ENCODE measurements at regions of chr1 and their contacts with region 1.

Region 1: DNA sequence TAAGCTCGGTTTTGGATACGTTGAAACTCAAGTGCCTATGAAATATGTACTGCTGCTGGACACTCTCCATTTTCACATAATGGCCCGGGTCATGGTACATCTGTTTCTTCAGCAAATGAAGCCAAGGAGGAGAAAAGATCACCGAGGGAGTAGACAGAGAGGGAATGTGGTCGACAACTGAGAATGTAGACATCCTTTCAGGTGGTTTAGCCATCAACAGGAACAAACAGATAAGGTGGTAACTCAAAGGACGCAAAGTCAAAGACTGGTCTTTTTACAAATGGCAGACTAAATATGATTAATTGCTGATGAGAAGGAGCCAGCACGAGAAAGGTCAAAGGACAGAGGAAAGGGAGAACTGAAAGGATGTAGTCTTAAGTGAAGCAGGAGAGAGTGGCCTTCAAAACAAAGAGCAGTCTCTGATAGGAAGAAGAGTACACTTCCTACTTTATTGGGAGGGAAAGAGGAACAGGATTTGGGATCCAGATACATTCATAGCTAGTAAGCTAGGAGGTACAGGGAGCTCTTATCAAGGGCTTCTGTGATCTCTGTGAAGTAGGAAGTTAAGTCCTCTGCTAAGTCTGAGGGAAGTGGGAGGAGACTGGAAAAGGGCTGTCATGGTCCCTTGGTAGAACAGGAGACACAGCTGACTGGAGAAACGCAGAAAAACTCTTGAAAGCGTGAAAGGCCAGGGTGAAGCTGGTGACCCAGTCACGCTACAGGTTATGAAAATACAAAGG is 28.3 kb downstream of the NUP133 start:
- DNase-seq: no peak
- H3K4me3 ChIP-seq: no peak overlapping the region
- H3K27ac ChIP-seq: no peak overlapping the region
- H3K4me1 ChIP-seq: no peaks in the 10 kb centered on the region
- H3K27me3 ChIP-seq: no peaks in the 10 kb centered on the region
- CTCF ChIP-seq: no peak
- POLR2A ChIP-seq: no peak

Region 2: GRCh38 chr1:228664399-228664914 is 815.4 kb before region 1 on chr1:
- CTCF ChIA-PET with region 1: interaction called, 11 read pairs
- POLR2A ChIA-PET with region 1: no interaction called
- dilution Hi-C with region 1: no loop called
- intact Hi-C with region 1: loop called (anchors 2 kb)
- DNase-seq: peak; percentile 61
- H3K4me3 ChIP-seq: no peak overlapping the region
- H3K27ac ChIP-seq: no peak overlapping the region
- H3K4me1 ChIP-seq: no peaks in the 10 kb centered on the region
- H3K27me3 ChIP-seq: no peaks in the 10 kb centered on the region
- CTCF ChIP-seq: peak; percentile 60 to 66
- POLR2A ChIP-seq: no peak

Region 3: DNA sequence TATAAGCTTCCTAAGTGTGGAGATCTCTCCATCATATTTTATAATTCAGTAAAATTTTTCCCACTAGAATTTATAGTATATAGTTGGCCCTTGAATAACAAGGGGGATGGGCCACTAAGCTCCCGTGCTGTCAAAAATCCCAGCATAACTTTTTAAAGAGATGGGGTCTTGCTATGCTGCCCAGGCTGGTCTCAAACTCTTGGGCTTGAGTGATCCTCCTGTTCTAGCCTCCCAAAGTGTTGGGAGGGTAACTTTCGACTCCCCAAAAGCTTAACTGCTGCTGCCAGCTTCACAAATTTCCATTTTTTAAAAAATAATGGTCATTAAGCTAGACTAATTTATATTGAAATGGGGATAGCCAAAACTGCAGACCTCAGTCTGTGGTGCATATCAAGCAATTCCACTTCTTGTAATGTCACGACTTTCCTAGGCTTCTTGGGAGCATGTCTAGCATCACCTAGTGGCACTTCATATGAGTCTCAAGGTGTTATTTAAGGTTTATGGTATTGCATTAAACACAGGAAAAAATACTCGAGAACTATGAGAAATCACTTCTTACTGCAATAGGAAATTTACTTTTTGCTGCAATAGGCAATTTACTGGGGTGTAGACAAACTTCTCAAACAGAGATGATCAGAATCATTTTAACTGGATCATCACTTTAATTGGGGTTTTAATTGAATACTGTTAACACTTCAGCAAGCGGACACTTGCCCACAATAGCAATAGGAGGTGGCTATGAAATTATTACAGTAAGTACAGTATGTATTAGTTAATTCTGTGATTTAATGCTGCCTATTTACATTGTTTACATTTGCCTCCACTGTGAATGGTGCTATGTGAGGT is 26.7 kb before region 1 on chr1:
- CTCF ChIA-PET with region 1: interaction called, 10 read pairs
- POLR2A ChIA-PET with region 1: no interaction called
- dilution Hi-C with region 1: no loop called
- intact Hi-C with region 1: no loop called
- DNase-seq: no peak
- H3K4me3 ChIP-seq: no peak overlapping the region
- H3K27ac ChIP-seq: no peak overlapping the region
- H3K4me1 ChIP-seq: no peaks in the 10 kb centered on the region
- H3K27me3 ChIP-seq: no peaks in the 10 kb centered on the region
- CTCF ChIP-seq: peak in 1 of 2 donors; percentile 25
- POLR2A ChIP-seq: no peak

Region 4: DNA sequence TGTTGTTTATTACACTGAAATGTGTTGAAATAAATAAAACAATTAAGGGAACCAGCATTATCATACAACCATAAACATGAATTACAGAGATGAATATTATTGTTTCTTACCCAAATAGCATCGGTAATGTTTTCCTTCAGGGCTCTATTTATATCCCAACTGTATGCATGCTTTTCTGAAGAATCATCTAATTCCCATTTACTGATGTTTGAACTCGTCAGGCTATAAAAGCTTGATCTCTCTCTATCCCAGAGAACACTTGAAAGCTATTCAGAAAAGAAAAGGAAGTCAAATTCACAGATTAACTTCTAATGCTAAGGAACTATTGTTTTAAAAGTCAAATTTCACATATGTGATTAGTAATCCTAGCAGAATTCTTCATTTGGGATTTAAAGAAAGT is 16.0 kb after region 1 on chr1:
- CTCF ChIA-PET with region 1: interaction called, 14 read pairs
- POLR2A ChIA-PET with region 1: no interaction called
- dilution Hi-C with region 1: no loop called
- intact Hi-C with region 1: no loop called
- DNase-seq: no peak
- H3K4me3 ChIP-seq: no peak overlapping the region
- H3K27ac ChIP-seq: no peak overlapping the region
- H3K4me1 ChIP-seq: no peaks in the 10 kb centered on the region
- H3K27me3 ChIP-seq: no peaks in the 10 kb centered on the region
- CTCF ChIP-seq: no peak
- POLR2A ChIP-seq: no peak

Region 5: DNA sequence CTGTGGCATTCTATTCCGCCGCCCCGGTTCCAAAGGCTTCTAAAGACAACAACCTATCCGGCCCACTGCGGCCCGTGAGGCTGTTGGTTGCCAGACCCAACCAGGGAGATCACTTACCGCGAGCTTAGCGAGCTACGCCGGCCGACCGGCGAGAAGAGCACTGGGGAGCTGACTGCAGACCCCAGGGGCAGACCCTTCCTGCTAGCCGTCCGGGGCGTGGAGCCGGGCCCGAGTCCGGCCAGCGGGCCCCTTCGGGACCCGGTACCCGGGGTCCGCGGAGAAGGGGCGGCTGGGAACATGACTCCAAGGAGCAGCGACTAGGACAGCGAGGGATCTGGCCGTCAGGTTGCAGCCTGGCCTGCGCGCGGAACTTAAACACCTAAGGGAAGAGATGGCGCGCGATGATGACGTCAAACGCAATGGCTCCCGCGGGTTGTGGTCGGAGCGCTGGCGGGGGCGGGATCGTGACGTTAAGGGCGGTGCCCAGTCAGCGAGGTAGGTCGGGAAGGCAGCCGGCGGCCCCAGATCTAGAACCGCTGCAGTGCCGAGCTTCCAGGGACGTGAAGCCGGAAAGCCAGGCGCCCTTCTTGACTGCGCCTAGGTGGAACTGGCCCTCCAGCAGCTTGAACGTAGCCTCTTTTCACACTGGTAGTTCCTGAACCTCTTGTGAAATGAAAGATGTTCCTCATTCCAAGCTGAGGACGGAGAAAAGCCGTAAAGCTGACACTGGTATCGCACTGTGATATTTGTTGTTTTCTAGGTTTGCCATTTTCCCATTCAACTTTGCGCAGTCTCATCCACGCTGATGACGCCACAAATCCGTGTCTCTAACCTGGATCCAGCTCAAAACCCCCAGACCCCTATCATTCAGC is 28.4 kb after region 1 on chr1 and contains the start of gene NUP133:
- CTCF ChIA-PET with region 1: interaction called, 10 read pairs
- POLR2A ChIA-PET with region 1: no interaction called
- dilution Hi-C with region 1: no loop called
- intact Hi-C with region 1: no loop called
- DNase-seq: peak; percentile 99
- H3K4me3 ChIP-seq: peak within 1 kb of the TSS; percentile 61 to 93 (median 64)
- H3K27ac ChIP-seq: peak within 1 kb of the TSS; percentile 56
- H3K4me1 ChIP-seq: peaks cover 14% of the 10 kb centered on the region
- H3K27me3 ChIP-seq: no peaks in the 10 kb centered on the region
- CTCF ChIP-seq: no peak
- POLR2A ChIP-seq: peak; percentile 99
- total RNA-seq, gene NUP133: 35.9 and 43.2 TPM in 2 replicates

Measured in endothelial cell of umbilical vein (primary cell).